Sigmoid colon (tissue), 7 donors: ENCODE measurements at regions of chr19 and their contacts with region 1.

Region 1: DNA sequence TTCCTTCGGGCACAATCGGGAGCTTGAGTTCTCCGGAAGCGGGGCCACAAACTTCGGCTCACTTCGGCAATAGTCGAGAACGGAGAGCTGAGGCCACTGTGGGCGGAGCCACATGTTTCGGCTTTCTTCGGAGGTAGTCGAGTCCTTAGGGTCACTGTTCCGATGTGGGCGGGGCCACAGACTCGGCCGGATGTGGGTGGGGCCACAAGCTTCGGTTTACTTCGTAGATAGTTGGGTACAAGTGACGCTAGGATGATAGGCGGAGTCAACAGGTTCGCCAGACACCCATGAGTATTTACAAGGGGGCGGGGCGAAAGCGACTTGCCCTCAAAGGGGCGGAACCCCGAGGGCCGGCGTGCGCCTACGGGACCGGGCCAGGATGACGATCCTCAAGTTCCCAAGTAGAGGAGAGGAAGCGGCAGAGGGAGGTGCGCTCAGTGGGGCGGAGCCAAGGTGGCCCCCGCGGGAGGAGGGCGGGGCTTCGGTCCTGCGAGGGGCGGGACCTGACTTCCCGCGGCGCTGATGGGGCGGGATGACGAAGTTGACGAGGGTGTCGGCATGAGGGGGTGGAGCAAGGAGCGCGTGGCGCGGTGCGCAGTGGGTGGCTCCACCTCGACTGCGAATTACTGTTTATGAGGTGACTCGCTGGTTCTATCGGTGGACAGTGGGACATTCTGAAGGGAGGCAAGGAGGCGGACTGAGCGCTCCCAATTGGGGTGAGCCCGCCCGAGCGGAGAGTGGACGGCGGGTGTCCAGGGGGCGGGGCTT is 539 bp upstream of the MBOAT7 start:
- DNase-seq: peak; percentile 100
- H3K4me3 ChIP-seq: peak overlapping the region; percentile 62 to 95 (median 88)
- H3K27ac ChIP-seq: peak overlapping the region; percentile 94 to 99 (median 98)
- H3K4me1 ChIP-seq: peaks cover 0 to 28% (median 26%) of the 10 kb centered on the region in 4 donors
- H3K27me3 ChIP-seq: no peaks in the 10 kb centered on the region
- CTCF ChIP-seq: no peak
- EP300 ChIP-seq: peak in 1 of 4 donors; percentile 7
- POLR2A ChIP-seq: peak; percentile 41 to 49

Region 2: GRCh38 chr19:53947624-53948023 is 242.3 kb before region 1 on chr19:
- intact Hi-C with region 1: no loop called
- DNase-seq: no peak
- H3K4me3 ChIP-seq: no peak overlapping the region
- H3K27ac ChIP-seq: no peak overlapping the region
- H3K4me1 ChIP-seq: no peaks in the 10 kb centered on the region
- H3K27me3 ChIP-seq: peaks cover 6 to 59% (median 30%) of the 10 kb centered on the region in 3 donors
- CTCF ChIP-seq: no peak
- EP300 ChIP-seq: no peak
- POLR2A ChIP-seq: no peak

Region 3: DNA sequence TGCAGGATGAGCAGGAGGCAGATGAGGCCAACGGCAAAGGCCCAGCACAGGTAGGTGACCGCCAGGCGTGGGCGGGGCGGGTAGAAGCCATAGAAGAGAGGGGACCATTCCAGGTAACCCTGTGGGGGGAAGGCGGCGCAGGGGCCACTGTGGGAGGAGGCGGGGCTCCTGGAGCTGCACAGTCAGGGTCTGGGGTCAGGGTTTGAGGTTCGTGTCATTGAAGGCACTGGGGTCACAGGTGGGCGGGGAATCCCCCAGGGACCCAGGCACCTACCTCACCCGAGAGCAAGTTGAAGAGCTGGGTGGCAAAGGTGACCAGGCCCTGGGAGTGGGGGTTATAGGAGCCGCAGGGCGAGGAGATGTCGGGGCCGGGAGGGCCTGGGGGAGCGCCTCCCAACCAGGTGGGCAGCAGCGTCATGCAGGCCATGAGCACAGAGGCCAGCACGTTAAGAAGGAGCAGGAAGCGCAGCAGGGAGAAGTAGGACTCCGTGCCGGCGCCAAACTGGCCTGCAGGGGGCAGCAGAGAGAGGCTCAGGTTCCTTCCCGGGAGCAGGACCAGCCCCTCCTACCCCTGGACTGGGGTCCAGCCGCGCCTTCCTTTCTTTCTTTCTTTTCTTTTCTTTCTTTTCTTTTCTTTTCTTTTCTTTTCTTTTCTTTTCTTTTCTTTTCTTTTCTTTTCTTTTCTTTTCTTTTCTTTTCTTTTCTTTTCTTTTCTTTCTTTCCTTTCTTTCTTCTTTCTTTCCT is 21.6 kb before region 1 on chr19:
- intact Hi-C with region 1: loop called (anchors 2 kb)
- DNase-seq: peak; percentile 94
- H3K4me3 ChIP-seq: no peak overlapping the region
- H3K27ac ChIP-seq: no peak overlapping the region
- H3K4me1 ChIP-seq: peaks cover 0 to 14% (median 10%) of the 10 kb centered on the region in 4 donors
- H3K27me3 ChIP-seq: peaks cover 9 to 50% (median 33%) of the 10 kb centered on the region in 3 donors
- CTCF ChIP-seq: peak; percentile 48 to 94 (median 86)
- EP300 ChIP-seq: no peak
- POLR2A ChIP-seq: no peak